ENCODE measurements at regions of chr5 and their contacts with region 1.

Region 1: DNA sequence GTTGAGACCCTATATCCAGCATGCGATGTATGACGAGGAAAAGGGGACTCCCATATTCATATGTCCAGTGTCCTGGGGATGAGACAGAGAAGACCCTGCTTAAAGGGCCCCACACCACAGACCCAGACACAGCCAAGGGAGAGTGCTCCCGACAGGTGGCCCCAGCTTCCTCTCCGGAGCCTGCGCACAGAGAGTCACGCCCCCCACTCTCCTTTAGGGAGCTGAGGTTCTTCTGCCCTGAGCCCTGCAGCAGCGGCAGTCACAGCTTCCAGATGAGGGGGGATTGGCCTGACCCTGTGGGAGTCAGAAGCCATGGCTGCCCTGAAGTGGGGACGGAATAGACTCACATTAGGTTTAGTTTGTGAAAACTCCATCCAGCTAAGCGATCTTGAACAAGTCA is 17.1 kb downstream of the BTNL3 start:
- DNase-seq: no peak
- ATAC-seq: no peak
- H3K4me3 ChIP-seq: no peak overlapping the region
- H3K27ac ChIP-seq: no peak overlapping the region
- H3K4me1 ChIP-seq: no peaks in the 10 kb centered on the region
- H3K27me3 ChIP-seq: no peaks in the 10 kb centered on the region

Region 2: GRCh38 chr5:180825768-180826525 is 179.8 kb before region 1 on chr5:
- intact Hi-C with region 1: no loop called
- DNase-seq: peak in 2 of 3 donors; percentile 75
- ATAC-seq: peak; percentile 58 to 69
- H3K4me3 ChIP-seq: no peak overlapping the region
- H3K27ac ChIP-seq: peak overlapping the region; percentile 9
- H3K4me1 ChIP-seq: peaks cover 19% of the 10 kb centered on the region
- H3K27me3 ChIP-seq: no peaks in the 10 kb centered on the region

Region 3: DNA sequence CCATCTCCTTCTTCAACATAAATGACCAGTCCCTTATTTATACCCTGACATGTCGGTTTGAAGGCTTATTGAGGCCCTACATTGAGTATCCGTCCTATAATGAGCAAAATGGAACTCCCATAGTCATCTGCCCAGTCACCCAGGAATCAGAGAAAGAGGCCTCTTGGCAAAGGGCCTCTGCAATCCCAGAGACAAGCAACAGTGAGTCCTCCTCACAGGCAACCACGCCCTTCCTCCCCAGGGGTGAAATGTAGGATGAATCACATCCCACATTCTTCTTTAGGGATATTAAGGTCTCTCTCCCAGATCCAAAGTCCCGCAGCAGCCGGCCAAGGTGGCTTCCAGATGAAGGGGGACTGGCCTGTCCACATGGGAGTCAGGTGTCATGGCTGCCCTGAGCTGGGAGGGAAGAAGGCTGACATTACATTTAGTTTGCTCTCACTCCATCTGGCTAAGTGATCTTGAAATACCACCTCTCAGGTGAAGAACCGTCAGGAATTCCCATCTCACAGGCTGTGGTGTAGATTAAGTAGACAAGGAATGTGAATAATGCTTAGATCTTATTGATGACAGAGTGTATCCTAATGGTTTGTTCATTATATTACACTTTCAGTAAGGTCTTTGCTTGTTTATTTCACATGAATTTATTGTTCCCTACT is 55.4 kb before region 1 on chr5:
- intact Hi-C with region 1: loop called in 1 of 4 experiments (anchors 2 kb)
- DNase-seq: no peak
- ATAC-seq: no peak
- H3K4me3 ChIP-seq: no peak overlapping the region
- H3K27ac ChIP-seq: no peak overlapping the region
- H3K4me1 ChIP-seq: no peaks in the 10 kb centered on the region
- H3K27me3 ChIP-seq: no peaks in the 10 kb centered on the region

Measured in right cardiac atrium (tissue), 5 donors.